GM12878 (cell line): ENCODE measurements at regions of chr17 and their contacts with region 1.

Region 1: GRCh38 chr17:42677008-42677857 is 439 bp upstream of the PLEKHH3 start:
- DNase-seq: peak; percentile 99
- ATAC-seq: peak; percentile 71
- H3K4me3 ChIP-seq: peak overlapping the region; percentile 98
- H3K27ac ChIP-seq: peak overlapping the region; percentile 93
- H3K4me1 ChIP-seq: peaks cover 19% of the 10 kb centered on the region
- H3K27me3 ChIP-seq: no peaks in the 10 kb centered on the region
- CTCF ChIP-seq: no peak
- EP300 ChIP-seq: peak in 1 of 2 experiments; percentile 12; a peak in 1 of 4 replicates
- POLR2A ChIP-seq: no peak
- RAD21 ChIP-seq: no peak

Region 2: DNA sequence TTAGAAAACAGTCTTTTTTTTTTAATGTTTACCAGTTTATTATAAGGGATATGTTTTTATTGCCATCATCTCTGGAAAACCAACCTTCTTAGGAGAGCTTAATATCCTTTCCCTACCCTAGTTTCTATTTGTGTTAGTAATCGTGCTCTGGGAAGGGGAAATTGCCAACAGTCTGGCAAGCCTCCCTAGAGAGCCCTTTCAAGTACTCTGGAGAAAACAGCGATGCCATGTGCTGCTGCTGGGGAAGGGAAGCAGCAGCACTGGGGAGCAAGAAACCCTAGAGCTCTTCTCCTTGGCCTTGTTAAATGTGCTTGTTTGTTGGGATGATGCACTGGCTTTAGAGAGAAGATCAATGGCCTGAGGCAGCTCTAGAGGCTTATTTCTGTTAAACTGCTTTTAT is 78.3 kb before region 1 on chr17:
- CTCF ChIA-PET with region 1: interaction called, 5 read pairs
- POLR2A ChIA-PET with region 1: interaction called, 21 read pairs
- RAD21 ChIA-PET with region 1: interaction called, 43 read pairs
- SMC1A ChIA-PET with region 1: interaction called, 85 read pairs
- in situ Hi-C with region 1: no loop called
- intact Hi-C with region 1: no loop called
- DNase-seq: no peak
- ATAC-seq: no peak
- H3K4me3 ChIP-seq: no peak overlapping the region
- H3K27ac ChIP-seq: no peak overlapping the region
- H3K4me1 ChIP-seq: peaks cover 8% of the 10 kb centered on the region
- H3K27me3 ChIP-seq: no peaks in the 10 kb centered on the region
- CTCF ChIP-seq: no peak
- EP300 ChIP-seq: no peak
- POLR2A ChIP-seq: no peak
- RAD21 ChIP-seq: no peak

Region 3: GRCh38 chr17:42618442-42619150 is 58.6 kb before region 1 on chr17:
- CTCF ChIA-PET with region 1: interaction called, 134 read pairs
- POLR2A ChIA-PET with region 1: interaction called, 15 read pairs
- RAD21 ChIA-PET with region 1: interaction called, 41 read pairs
- SMC1A ChIA-PET with region 1: interaction called, 60 read pairs
- in situ Hi-C with region 1: no loop called
- intact Hi-C with region 1: loop called (anchors 2 kb)
- DNase-seq: peak; percentile 93
- ATAC-seq: peak; percentile 86
- H3K4me3 ChIP-seq: peak overlapping the region; percentile 58
- H3K27ac ChIP-seq: peak overlapping the region; percentile 91
- H3K4me1 ChIP-seq: peaks cover 33% of the 10 kb centered on the region
- H3K27me3 ChIP-seq: no peaks in the 10 kb centered on the region
- CTCF ChIP-seq: peak in 1 of 3 experiments; percentile 62; a peak in 3 of 6 replicates
- EP300 ChIP-seq: peak; percentile 49 to 84; a peak in 2 of 4 replicates
- POLR2A ChIP-seq: no peak; the same call in 1 of the 2 replicates
- RAD21 ChIP-seq: peak; percentile 64

Region 4: GRCh38 chr17:42653179-42654124 is 23.8 kb before region 1 on chr17:
- CTCF ChIA-PET with region 1: interaction called, 13 read pairs
- POLR2A ChIA-PET with region 1: interaction called, 29 read pairs
- RAD21 ChIA-PET with region 1: interaction called, 10 read pairs
- SMC1A ChIA-PET with region 1: interaction called, 9 read pairs
- in situ Hi-C with region 1: no loop called
- intact Hi-C with region 1: no loop called
- DNase-seq: no peak
- ATAC-seq: no peak
- H3K4me3 ChIP-seq: no peak overlapping the region
- H3K27ac ChIP-seq: no peak overlapping the region
- H3K4me1 ChIP-seq: peaks cover 20% of the 10 kb centered on the region
- H3K27me3 ChIP-seq: no peaks in the 10 kb centered on the region
- CTCF ChIP-seq: no peak
- EP300 ChIP-seq: no peak
- POLR2A ChIP-seq: no peak
- RAD21 ChIP-seq: no peak

Region 5: GRCh38 chr17:42704837-42705494 is 27.7 kb after region 1 on chr17:
- CTCF ChIA-PET with region 1: interaction called, 12 read pairs
- POLR2A ChIA-PET with region 1: interaction called, 6 read pairs
- RAD21 ChIA-PET with region 1: interaction called, 7 read pairs
- SMC1A ChIA-PET with region 1: interaction called, 28 read pairs
- in situ Hi-C with region 1: no loop called
- intact Hi-C with region 1: no loop called
- DNase-seq: peak; percentile 94
- ATAC-seq: peak; percentile 92
- H3K4me3 ChIP-seq: peak overlapping the region; percentile 46; the same call in 1 of the 2 replicates
- H3K27ac ChIP-seq: peak overlapping the region; percentile 92
- H3K4me1 ChIP-seq: peaks cover 50% of the 10 kb centered on the region
- H3K27me3 ChIP-seq: no peaks in the 10 kb centered on the region
- CTCF ChIP-seq: no peak
- EP300 ChIP-seq: peak; percentile 68 to 95
- POLR2A ChIP-seq: 0 out of 2 replicates have a peak, but pooled peaks have one; percentile 15
- RAD21 ChIP-seq: no peak; the same call in 1 of the 2 replicates

Region 6: DNA sequence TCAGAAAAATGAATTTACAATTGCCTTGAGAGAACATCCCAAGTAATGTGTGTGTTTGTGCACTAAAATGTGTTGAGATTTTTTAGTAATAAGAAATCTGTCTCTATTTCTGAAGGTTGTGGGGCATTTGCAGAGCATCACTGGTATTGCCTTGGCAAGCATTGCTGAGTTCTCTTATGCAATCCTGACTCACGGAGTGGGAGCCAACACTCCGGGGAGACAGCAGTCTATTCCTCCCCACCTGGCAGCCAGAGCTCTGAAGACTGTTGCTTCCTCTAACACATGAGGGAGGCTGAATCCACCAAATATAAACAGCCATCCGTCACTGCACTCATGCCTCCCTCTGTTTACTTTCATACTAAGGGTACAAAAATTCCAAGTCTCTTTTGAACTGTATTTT is 132.0 kb after region 1 on chr17:
- CTCF ChIA-PET with region 1: no interaction called
- POLR2A ChIA-PET with region 1: no interaction called
- RAD21 ChIA-PET with region 1: no interaction called
- SMC1A ChIA-PET with region 1: no interaction called
- in situ Hi-C with region 1: no loop called
- intact Hi-C with region 1: no loop called
- DNase-seq: no peak
- ATAC-seq: no peak
- H3K4me3 ChIP-seq: no peak overlapping the region
- H3K27ac ChIP-seq: no peak overlapping the region
- H3K4me1 ChIP-seq: no peaks in the 10 kb centered on the region
- H3K27me3 ChIP-seq: no peaks in the 10 kb centered on the region
- CTCF ChIP-seq: no peak
- EP300 ChIP-seq: no peak
- POLR2A ChIP-seq: no peak
- RAD21 ChIP-seq: no peak

Region 7: DNA sequence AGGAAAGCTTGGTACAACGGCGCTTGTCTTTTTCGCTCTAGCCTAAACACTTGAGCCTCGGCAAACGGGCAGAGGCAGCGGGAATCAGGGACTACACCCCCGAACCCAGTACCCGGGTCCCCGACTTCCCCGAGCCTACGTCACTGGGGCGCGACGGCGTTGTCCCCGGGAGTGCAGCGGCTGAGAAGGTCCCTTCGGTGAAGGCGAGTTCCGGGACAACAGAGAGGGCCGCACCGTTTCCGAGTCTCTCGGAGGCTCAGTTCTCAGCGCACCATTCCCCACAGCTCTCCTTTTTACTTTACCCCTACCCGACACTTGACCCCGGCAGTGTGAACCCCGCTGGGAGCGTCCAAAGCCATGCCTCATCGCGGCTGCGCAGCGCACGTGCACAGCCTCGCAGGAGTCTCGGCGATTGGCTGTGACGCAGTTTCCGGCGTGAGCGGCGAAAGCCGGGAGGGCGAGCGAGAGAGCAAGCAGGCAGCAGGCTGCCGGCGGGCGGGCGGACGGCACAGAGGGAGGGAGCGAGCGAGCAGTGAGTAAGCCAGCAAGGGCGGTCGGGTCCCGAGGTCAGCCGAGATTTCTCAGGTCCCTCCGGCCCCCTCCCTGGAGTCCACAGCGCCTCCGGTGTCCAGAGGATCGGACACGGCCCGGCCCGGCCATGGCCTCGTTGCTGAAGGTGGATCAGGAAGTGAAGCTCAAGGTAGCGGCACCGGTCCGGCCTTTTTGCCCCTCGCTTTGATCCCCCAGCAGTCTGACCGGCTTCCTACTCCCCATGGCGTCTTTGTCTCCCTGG is 155.9 kb after region 1 on chr17 and contains the start of gene PSME3:
- CTCF ChIA-PET with region 1: no interaction called
- POLR2A ChIA-PET with region 1: no interaction called
- RAD21 ChIA-PET with region 1: no interaction called
- SMC1A ChIA-PET with region 1: no interaction called
- in situ Hi-C with region 1: no loop called
- intact Hi-C with region 1: no loop called
- DNase-seq: peak; percentile 59
- ATAC-seq: peak; percentile 95
- H3K4me3 ChIP-seq: peak within 1 kb of the TSS; percentile 93
- H3K27ac ChIP-seq: peak within 1 kb of the TSS; percentile 92
- H3K4me1 ChIP-seq: peaks cover 5% of the 10 kb centered on the region; the same call in 1 of the 2 replicates
- H3K27me3 ChIP-seq: no peaks in the 10 kb centered on the region
- CTCF ChIP-seq: no peak
- EP300 ChIP-seq: no peak
- POLR2A ChIP-seq: peak; percentile 97
- RAD21 ChIP-seq: no peak
- polyA plus RNA-seq, gene PSME3: 26.9 to 33.8 TPM